Aorta (tissue), 5 donors: ENCODE measurements at regions of chr12 and their contacts with region 1.

Region 1: GRCh38 chr12:104733717-104734175 is 224.3 kb downstream of the SLC41A2 start:
- DNase-seq: peak; percentile 77 to 87
- ATAC-seq: peak; percentile 57
- H3K4me3 ChIP-seq: no peak overlapping the region
- H3K27ac ChIP-seq: no peak overlapping the region
- H3K4me1 ChIP-seq: peaks cover 2 to 7% of the 10 kb centered on the region in 2 donors
- H3K27me3 ChIP-seq: no peaks in the 10 kb centered on the region

Region 2: DNA sequence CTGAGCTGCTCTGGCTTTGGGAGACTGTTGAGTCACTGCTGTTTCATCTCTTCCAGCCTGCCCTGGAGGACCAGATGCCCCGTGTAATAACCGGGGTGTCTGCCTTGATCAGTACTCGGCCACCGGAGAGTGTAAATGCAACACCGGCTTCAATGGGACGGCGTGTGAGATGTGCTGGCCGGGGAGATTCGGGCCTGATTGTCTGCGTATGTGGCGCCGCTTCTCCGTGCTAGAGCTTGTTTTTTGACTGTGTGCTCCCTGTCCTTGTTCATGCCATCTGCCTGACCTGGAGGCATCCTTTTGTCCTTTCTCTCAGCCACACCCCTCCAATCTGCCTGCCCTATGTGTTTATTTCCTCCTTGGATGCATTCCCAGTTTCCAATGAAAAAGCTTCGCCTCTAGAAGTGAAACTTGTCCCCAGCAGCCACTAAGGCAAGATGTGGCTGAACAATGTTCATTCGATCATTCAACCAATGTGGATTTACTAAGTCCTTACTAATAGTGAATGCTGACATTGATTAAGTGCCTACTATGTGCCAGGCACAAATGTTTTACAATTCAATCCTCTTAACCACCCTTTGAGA is 991.3 kb before region 1 on chr12:
- intact Hi-C with region 1: no loop called
- DNase-seq: no peak
- ATAC-seq: no peak
- H3K4me3 ChIP-seq: no peak overlapping the region
- H3K27ac ChIP-seq: no peak overlapping the region
- H3K4me1 ChIP-seq: no peaks in the 10 kb centered on the region
- H3K27me3 ChIP-seq: no peaks in the 10 kb centered on the region

Region 3: GRCh38 chr12:104381731-104382480 is 351.8 kb before region 1 on chr12:
- intact Hi-C with region 1: loop called in 1 of 2 experiments (anchors 5 kb)
- DNase-seq: peak; percentile 78 to 90
- ATAC-seq: peak; percentile 91
- H3K4me3 ChIP-seq: no peak overlapping the region
- H3K27ac ChIP-seq: no peak overlapping the region
- H3K4me1 ChIP-seq: no peaks in the 10 kb centered on the region
- H3K27me3 ChIP-seq: no peaks in the 10 kb centered on the region

Region 4: DNA sequence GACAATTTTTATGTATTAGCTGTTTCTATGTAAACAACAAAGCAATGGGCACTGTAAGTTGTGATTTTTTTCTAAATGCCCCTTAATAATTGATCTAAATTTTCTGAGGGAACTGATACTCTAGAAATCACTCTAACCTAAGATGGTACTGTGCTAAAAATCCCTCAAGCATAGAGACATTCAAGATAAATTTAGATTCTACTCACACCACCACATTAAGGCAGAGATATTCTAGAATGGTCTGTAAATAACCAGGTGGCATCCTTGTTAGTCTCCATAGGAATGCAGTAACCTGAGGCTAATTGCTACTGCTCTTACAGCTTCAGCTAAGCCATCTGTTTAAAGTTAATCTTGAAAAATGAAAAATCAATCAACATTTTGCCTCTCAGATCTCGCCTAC is 137.1 kb after region 1 on chr12:
- intact Hi-C with region 1: loop called (anchors 5 to 10 kb)
- DNase-seq: no peak
- ATAC-seq: no peak
- H3K4me3 ChIP-seq: no peak overlapping the region
- H3K27ac ChIP-seq: no peak overlapping the region
- H3K4me1 ChIP-seq: no peaks in the 10 kb centered on the region
- H3K27me3 ChIP-seq: no peaks in the 10 kb centered on the region

Region 5: DNA sequence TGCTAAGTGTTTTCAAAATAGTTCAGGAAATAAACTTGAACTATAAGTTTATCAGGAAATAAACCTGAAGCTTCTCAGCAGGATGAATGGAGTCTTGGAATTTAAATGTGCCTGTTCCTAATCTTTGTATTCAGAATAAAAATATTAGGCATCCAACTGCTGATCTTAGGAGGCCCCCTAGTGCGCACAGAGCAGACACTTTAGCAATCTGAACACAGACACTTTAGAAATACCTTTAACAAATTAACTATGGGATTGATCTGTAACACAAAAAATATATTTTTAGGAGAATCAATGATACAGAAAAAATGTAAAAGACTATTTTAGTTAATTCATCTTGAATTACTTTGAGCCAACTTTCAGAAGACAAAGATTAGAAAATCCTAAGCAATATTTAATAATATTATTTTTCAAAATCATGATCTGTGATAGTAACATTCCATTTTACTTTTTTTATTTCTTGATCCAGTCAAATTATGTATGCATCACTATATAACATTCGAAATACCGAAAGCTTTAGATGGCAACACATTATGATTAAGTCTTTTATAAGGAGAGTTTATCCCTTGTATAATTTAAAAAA is 143.5 kb after region 1 on chr12:
- intact Hi-C with region 1: loop called (anchors 5 to 10 kb)
- DNase-seq: no peak
- ATAC-seq: peak; percentile 74
- H3K4me3 ChIP-seq: no peak overlapping the region
- H3K27ac ChIP-seq: no peak overlapping the region
- H3K4me1 ChIP-seq: no peaks in the 10 kb centered on the region
- H3K27me3 ChIP-seq: no peaks in the 10 kb centered on the region

Region 6: GRCh38 chr12:104910196-104910840 is 176.6 kb after region 1 on chr12:
- intact Hi-C with region 1: no loop called
- DNase-seq: no peak
- ATAC-seq: peak; percentile 73
- H3K4me3 ChIP-seq: no peak overlapping the region
- H3K27ac ChIP-seq: no peak overlapping the region
- H3K4me1 ChIP-seq: peaks cover 0 to 2% of the 10 kb centered on the region in 2 donors
- H3K27me3 ChIP-seq: no peaks in the 10 kb centered on the region

Region 7: GRCh38 chr12:105053116-105053572 is 319.4 kb after region 1 on chr12:
- intact Hi-C with region 1: loop called (anchors 5 kb)
- DNase-seq: peak; percentile 75 to 80
- ATAC-seq: peak; percentile 88
- H3K4me3 ChIP-seq: no peak overlapping the region
- H3K27ac ChIP-seq: no peak overlapping the region
- H3K4me1 ChIP-seq: no peaks in the 10 kb centered on the region
- H3K27me3 ChIP-seq: no peaks in the 10 kb centered on the region